ENCODE measurements at regions of chr2 and their contacts with region 1.

Region 1: GRCh38 chr2:113138428-113139322 is 11.3 kb downstream of the IL1RN start:
- DNase-seq: peak; percentile 16 to 79 (median 64)
- H3K4me3 ChIP-seq: no peak overlapping the region
- H3K4me3 Mint-ChIP-seq: peak overlapping the region in 6 of 7 donors; percentile 60 to 77 (median 72)
- H3K27ac ChIP-seq: no peak overlapping the region
- H3K27ac Mint-ChIP-seq: peak overlapping the region; percentile 5 to 90 (median 52)
- H3K4me1 ChIP-seq: peaks cover 14% of the 10 kb centered on the region
- H3K4me1 Mint-ChIP-seq: peaks cover 13 to 22% (median 21%) of the 10 kb centered on the region in 3 donors
- H3K27me3 ChIP-seq: no peaks in the 10 kb centered on the region
- H3K27me3 Mint-ChIP-seq: no peaks in the 10 kb centered on the region

Region 2: DNA sequence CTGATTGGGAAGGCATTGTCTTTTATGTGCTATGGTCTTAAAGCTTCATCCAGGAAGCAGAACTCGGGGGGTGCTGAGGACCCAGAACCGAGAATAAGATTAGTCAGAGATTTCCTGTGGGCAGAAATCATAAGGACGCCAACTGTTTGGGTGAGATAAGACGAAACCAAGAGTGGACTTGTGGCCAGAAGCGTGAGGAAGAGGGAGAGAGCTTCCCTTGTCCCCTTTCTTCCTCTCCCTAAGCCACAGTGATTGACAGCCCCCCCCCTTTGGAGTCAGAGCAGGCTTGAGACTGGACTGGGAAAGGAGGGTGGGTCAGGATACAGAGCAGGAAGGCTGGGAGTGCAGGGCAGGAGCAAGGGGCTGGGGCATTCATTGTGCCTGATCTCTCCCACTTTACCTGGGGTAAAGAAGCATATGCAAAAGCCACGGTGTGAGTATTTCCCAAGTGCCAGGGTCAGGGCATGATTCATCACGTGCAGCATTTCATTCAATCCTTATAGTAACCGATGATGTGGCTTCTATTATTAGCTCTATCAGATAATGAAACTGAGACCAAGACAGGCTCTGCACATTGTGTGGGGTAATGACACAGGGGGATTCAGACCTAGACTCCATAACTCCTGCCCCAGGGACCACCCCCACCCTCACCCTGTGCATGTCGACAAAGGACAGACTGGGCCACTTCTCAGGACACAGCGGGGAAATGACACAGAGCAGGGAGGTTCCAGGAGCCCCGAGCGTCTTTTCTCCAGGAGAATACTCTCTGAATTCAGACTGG is 14.3 kb before region 1 on chr2:
- CTCF ChIA-PET with region 1: interaction called, 15 read pairs
- POLR2A ChIA-PET with region 1: no interaction called
- DNase-seq: no peak
- H3K4me3 ChIP-seq: no peak overlapping the region
- H3K4me3 Mint-ChIP-seq: no peak overlapping the region
- H3K27ac ChIP-seq: no peak overlapping the region
- H3K27ac Mint-ChIP-seq: peak overlapping the region in 1 of 8 donors; percentile 38
- H3K4me1 ChIP-seq: no peaks in the 10 kb centered on the region
- H3K4me1 Mint-ChIP-seq: peaks cover 6 to 20% (median 12%) of the 10 kb centered on the region in 3 donors
- H3K27me3 ChIP-seq: no peaks in the 10 kb centered on the region
- H3K27me3 Mint-ChIP-seq: peaks cover 8 to 26% of the 10 kb centered on the region in 2 donors

Region 3: GRCh38 chr2:113167115-113167932 is 28.6 kb after region 1 on chr2:
- CTCF ChIA-PET with region 1: interaction called, 117 read pairs
- POLR2A ChIA-PET with region 1: no interaction called
- DNase-seq: peak in 2 of 5 donors; percentile 50 to 58
- H3K4me3 ChIP-seq: peak overlapping the region; percentile 57
- H3K4me3 Mint-ChIP-seq: peak overlapping the region; percentile 1 to 75 (median 63)
- H3K27ac ChIP-seq: no peak overlapping the region
- H3K27ac Mint-ChIP-seq: peak overlapping the region; percentile 79 to 98 (median 92)
- H3K4me1 ChIP-seq: peaks cover 65% of the 10 kb centered on the region
- H3K4me1 Mint-ChIP-seq: peaks cover 56 to 76% (median 74%) of the 10 kb centered on the region in 3 donors
- H3K27me3 ChIP-seq: no peaks in the 10 kb centered on the region
- H3K27me3 Mint-ChIP-seq: no peaks in the 10 kb centered on the region

Region 4: DNA sequence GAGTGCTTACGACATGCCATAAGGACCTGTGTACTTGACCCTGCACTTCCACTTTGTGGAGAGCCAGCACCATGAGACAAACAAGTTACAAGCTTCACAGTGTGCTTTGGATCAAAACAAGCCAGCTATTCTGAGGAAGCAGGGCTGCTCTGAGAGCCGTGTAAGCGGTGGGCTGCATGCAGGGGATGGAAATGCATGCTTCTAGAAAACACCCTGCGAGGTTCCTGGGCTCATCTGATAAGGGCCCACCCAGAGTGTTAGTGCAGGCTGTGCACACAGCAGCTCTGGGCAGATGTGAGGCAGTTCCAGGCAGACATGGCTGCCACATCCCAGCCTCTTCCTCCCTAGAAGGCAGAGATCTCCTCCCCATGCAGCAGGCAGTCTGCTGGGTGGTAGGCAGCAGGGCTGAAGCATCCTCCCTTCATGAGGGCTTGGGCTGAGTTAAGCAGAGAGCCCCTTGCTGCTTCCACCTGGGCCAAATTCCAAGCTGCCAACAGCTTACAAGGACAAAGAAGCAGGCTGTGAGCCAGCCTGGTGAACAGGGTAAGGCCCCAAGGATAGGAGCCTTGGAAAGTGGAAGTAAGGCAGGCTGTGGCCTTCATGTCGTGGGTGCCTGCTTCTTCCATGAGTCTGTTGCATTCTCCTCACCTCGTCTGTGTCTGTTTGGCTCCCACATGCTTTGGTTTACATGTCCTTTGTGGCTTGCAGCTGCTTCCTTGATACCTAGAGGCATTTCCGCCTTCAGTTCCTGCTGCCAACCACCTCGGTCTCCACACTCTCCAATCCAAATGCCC is 42.8 kb after region 1 on chr2:
- CTCF ChIA-PET with region 1: interaction called, 117 read pairs
- POLR2A ChIA-PET with region 1: interaction called, 10 read pairs
- DNase-seq: peak in 1 of 5 donors; percentile 33
- H3K4me3 ChIP-seq: peak overlapping the region; percentile 48
- H3K4me3 Mint-ChIP-seq: peak overlapping the region; percentile 4 to 95 (median 80)
- H3K27ac ChIP-seq: no peak overlapping the region
- H3K27ac Mint-ChIP-seq: peak overlapping the region; percentile 74 to 94 (median 93)
- H3K4me1 ChIP-seq: peaks cover 98% of the 10 kb centered on the region
- H3K4me1 Mint-ChIP-seq: peaks cover 87 to 97% (median 97%) of the 10 kb centered on the region in 3 donors
- H3K27me3 ChIP-seq: no peaks in the 10 kb centered on the region
- H3K27me3 Mint-ChIP-seq: no peaks in the 10 kb centered on the region

Region 5: GRCh38 chr2:113203901-113204519 is 65.3 kb after region 1 on chr2:
- CTCF ChIA-PET with region 1: interaction called, 470 read pairs
- POLR2A ChIA-PET with region 1: interaction called, 14 read pairs
- DNase-seq: peak; percentile 52 to 80 (median 67)
- H3K4me3 ChIP-seq: no peak overlapping the region
- H3K4me3 Mint-ChIP-seq: peak overlapping the region in 4 of 7 donors; percentile 20 to 54 (median 34)
- H3K27ac ChIP-seq: no peak overlapping the region
- H3K27ac Mint-ChIP-seq: peak overlapping the region; percentile 45 to 92 (median 86)
- H3K4me1 ChIP-seq: peaks cover 8% of the 10 kb centered on the region
- H3K4me1 Mint-ChIP-seq: peaks cover 16 to 33% (median 19%) of the 10 kb centered on the region in 3 donors
- H3K27me3 ChIP-seq: no peaks in the 10 kb centered on the region
- H3K27me3 Mint-ChIP-seq: no peaks in the 10 kb centered on the region

Region 6: GRCh38 chr2:113248997-113249770 is 110.5 kb after region 1 on chr2:
- CTCF ChIA-PET with region 1: interaction called, 45 read pairs
- POLR2A ChIA-PET with region 1: no interaction called
- DNase-seq: peak; percentile 66 to 81 (median 67)
- H3K4me3 ChIP-seq: no peak overlapping the region
- H3K4me3 Mint-ChIP-seq: no peak overlapping the region
- H3K27ac ChIP-seq: no peak overlapping the region
- H3K27ac Mint-ChIP-seq: peak overlapping the region in 7 of 8 donors; percentile 42 to 95 (median 74)
- H3K4me1 ChIP-seq: peaks cover 50% of the 10 kb centered on the region
- H3K4me1 Mint-ChIP-seq: peaks cover 49 to 54% (median 52%) of the 10 kb centered on the region in 3 donors
- H3K27me3 ChIP-seq: no peaks in the 10 kb centered on the region
- H3K27me3 Mint-ChIP-seq: no peaks in the 10 kb centered on the region

Measured in CD8-positive, alpha-beta memory T cell (primary cell).